Lower lobe of right lung (tissue), 2 donors: ENCODE measurements at regions of chr9 and their contacts with region 1.

Region 1: GRCh38 chr9:92716557-92716956 is 46.6 kb upstream of the IPPK start:
- DNase-seq: no peak
- ATAC-seq: peak; percentile 71 to 74
- H3K4me3 ChIP-seq: no peak overlapping the region
- H3K27ac ChIP-seq: no peak overlapping the region
- H3K4me1 ChIP-seq: peaks cover 8% of the 10 kb centered on the region
- H3K27me3 ChIP-seq: no peaks in the 10 kb centered on the region
- CTCF ChIP-seq: peak; percentile 92

Region 2: GRCh38 chr9:92512622-92513021 is 203.9 kb before region 1 on chr9:
- intact Hi-C with region 1: no loop called
- DNase-seq: no peak
- ATAC-seq: no peak
- H3K4me3 ChIP-seq: no peak overlapping the region
- H3K27ac ChIP-seq: no peak overlapping the region
- H3K4me1 ChIP-seq: no peaks in the 10 kb centered on the region
- H3K27me3 ChIP-seq: no peaks in the 10 kb centered on the region
- CTCF ChIP-seq: no peak

Region 3: GRCh38 chr9:92781923-92782322 is 65.4 kb after region 1 on chr9:
- intact Hi-C with region 1: loop called (anchors 10 kb)
- DNase-seq: no peak
- ATAC-seq: no peak
- H3K4me3 ChIP-seq: no peak overlapping the region
- H3K27ac ChIP-seq: no peak overlapping the region
- H3K4me1 ChIP-seq: no peaks in the 10 kb centered on the region
- H3K27me3 ChIP-seq: no peaks in the 10 kb centered on the region
- CTCF ChIP-seq: no peak